Breast epithelium (tissue), 4 donors: ENCODE measurements at regions of chr17 and their contacts with region 1.

Region 1: GRCh38 chr17:52027620-52028295 is 130.8 kb downstream of the CA10 start:
- DNase-seq: no peak
- H3K4me3 ChIP-seq: no peak overlapping the region
- H3K27ac ChIP-seq: no peak overlapping the region
- H3K4me1 ChIP-seq: no peaks in the 10 kb centered on the region
- H3K27me3 ChIP-seq: no peaks in the 10 kb centered on the region
- CTCF ChIP-seq: no peak
- POLR2A ChIP-seq: no peak

Region 2: GRCh38 chr17:51585514-51586104 is 442.1 kb before region 1 on chr17:
- intact Hi-C with region 1: loop called (anchors 5 kb)
- DNase-seq: no peak
- H3K4me3 ChIP-seq: no peak overlapping the region
- H3K27ac ChIP-seq: no peak overlapping the region
- H3K4me1 ChIP-seq: no peaks in the 10 kb centered on the region
- H3K27me3 ChIP-seq: no peaks in the 10 kb centered on the region
- CTCF ChIP-seq: peak in 2 of 3 donors; percentile 14 to 46
- POLR2A ChIP-seq: no peak

Region 3: GRCh38 chr17:51971121-51971520 is 56.6 kb before region 1 on chr17:
- intact Hi-C with region 1: loop called (anchors 2 kb)
- DNase-seq: no peak
- H3K4me3 ChIP-seq: no peak overlapping the region
- H3K27ac ChIP-seq: no peak overlapping the region
- H3K4me1 ChIP-seq: no peaks in the 10 kb centered on the region
- H3K27me3 ChIP-seq: no peaks in the 10 kb centered on the region
- CTCF ChIP-seq: no peak
- POLR2A ChIP-seq: no peak

Region 4: DNA sequence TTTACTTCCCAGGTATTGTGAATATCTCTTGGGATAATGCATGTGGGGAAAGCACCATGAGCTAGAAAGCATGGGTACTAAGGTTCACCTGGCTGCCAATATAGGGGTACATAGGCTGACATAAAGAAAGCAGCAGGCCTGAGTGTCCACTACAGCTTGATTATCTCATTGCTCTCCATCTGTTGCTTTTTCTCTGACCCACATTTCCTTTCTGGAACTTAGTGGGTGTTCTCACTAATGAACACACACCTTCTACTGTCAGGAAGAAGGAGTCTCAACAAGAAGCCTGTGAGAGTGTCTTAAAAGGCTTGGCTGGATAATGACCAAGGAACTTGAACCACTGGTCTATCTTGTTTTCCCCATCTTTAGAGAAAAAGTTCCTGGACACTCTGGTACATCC is 68.3 kb after region 1 on chr17:
- intact Hi-C with region 1: no loop called
- DNase-seq: no peak
- H3K4me3 ChIP-seq: no peak overlapping the region
- H3K27ac ChIP-seq: no peak overlapping the region
- H3K4me1 ChIP-seq: no peaks in the 10 kb centered on the region
- H3K27me3 ChIP-seq: no peaks in the 10 kb centered on the region
- CTCF ChIP-seq: no peak
- POLR2A ChIP-seq: no peak

Region 5: DNA sequence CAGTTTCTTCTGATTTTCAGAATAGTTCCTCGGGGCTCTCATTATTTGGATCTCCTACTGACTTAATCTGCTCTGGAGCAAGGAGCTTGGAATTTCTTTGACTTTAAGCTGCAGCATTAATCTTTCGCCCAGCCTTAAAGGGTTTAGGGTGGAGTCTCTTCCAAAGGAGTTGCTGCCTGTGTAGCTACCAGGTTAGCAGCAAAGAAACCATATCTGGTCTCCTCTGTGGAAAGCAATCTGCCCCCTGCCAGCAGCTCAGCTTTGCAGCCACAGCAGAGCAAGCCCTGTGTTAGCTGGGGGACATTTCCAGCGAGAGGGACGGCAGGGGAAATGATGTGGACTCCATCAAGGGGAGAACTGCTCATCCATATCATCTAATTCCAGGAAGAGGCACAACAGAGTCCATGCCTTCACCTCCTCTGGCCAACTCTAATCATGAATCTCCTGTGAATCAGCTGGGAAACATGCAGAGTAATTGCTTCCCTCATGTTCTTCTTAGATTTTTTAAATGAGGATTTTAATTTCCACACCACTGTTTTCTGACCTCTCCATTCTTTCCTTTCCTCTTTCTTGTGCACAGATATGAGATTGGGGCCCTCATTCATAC is 958.4 kb after region 1 on chr17:
- intact Hi-C with region 1: no loop called
- DNase-seq: no peak
- H3K4me3 ChIP-seq: no peak overlapping the region
- H3K27ac ChIP-seq: no peak overlapping the region
- H3K4me1 ChIP-seq: no peaks in the 10 kb centered on the region
- H3K27me3 ChIP-seq: no peaks in the 10 kb centered on the region
- CTCF ChIP-seq: no peak
- POLR2A ChIP-seq: no peak